ENCODE measurements at regions of chr16 and their contacts with region 1.

Region 1: DNA sequence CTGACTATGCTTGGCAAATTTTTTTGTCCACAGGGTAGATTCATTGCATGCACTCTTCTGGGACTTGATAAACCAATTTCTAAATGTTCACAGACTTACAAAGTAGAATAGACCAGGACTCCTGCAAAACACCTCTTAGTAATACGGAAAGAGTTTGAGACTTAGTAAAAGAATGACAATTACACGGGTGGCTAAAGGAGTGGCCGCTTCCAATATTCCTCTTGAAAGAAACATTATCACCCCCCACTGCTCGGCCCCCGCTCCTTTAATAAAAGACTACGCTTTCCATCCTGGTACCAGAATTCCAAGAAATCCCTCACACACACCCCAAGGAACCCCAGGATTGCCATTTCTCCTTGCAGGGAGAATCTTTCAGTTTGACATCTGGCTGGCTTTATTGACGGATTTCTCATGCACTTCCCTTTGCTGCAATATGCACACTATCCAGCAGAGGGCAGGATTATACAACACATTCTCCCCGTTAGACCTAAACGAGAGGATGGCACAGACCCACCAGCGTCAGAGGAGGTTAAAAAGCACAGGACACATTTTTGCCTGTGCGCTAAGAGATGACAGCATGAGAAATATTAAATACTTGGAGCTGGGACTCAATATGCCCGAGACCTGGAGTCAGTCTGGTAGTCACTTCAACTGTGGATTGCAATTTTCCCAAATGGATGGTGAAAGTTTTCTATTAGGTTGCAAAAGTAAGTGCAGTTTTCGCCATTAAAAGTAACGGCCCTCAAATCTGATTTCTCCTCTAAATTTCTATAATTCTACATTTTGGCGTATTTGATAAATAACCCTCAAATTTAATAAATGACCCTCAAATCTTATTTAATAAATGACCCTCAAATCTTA is 46.6 kb upstream of the NUDT7 start:
- DNase-seq: peak; percentile 88
- H3K4me3 ChIP-seq: no peak overlapping the region
- H3K27ac ChIP-seq: no peak overlapping the region
- H3K4me1 ChIP-seq: no peaks in the 10 kb centered on the region
- H3K27me3 ChIP-seq: no peaks in the 10 kb centered on the region
- CTCF ChIP-seq: peak; percentile 84 to 91 (median 90)
- POLR2A ChIP-seq: no peak

Region 2: DNA sequence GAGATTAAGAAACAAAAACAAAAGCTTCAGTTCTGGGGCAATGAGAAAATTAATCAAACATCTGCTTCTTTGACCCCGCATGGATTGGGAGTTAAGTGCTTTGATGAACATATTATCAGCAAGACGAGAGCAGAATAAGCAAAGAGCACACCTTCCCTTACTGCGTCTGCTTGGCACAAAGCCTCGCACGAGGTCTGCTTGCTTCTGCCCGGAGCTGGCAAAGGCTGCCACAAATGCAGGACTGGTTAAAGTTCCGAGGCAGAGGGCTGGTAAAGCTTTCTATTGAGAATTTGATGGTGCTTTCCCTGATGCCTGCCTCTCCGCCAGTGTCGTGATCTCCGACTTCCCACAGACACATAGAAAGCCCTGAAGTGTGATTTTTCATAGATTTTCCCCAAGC is 129.7 kb after region 1 on chr16:
- intact Hi-C with region 1: no loop called
- DNase-seq: peak; percentile 68
- H3K4me3 ChIP-seq: no peak overlapping the region
- H3K27ac ChIP-seq: no peak overlapping the region
- H3K4me1 ChIP-seq: no peaks in the 10 kb centered on the region
- H3K27me3 ChIP-seq: no peaks in the 10 kb centered on the region
- CTCF ChIP-seq: no peak
- POLR2A ChIP-seq: no peak

Region 3: GRCh38 chr16:77971306-77972271 is 295.9 kb after region 1 on chr16:
- intact Hi-C with region 1: loop called (anchors 10 kb)
- DNase-seq: peak; percentile 90
- H3K4me3 ChIP-seq: no peak overlapping the region
- H3K27ac ChIP-seq: no peak overlapping the region
- H3K4me1 ChIP-seq: no peaks in the 10 kb centered on the region
- H3K27me3 ChIP-seq: no peaks in the 10 kb centered on the region
- CTCF ChIP-seq: peak; percentile 72 to 82 (median 77)
- POLR2A ChIP-seq: no peak